ENCODE measurements at regions of chr5 and their contacts with region 1.

Region 1: DNA sequence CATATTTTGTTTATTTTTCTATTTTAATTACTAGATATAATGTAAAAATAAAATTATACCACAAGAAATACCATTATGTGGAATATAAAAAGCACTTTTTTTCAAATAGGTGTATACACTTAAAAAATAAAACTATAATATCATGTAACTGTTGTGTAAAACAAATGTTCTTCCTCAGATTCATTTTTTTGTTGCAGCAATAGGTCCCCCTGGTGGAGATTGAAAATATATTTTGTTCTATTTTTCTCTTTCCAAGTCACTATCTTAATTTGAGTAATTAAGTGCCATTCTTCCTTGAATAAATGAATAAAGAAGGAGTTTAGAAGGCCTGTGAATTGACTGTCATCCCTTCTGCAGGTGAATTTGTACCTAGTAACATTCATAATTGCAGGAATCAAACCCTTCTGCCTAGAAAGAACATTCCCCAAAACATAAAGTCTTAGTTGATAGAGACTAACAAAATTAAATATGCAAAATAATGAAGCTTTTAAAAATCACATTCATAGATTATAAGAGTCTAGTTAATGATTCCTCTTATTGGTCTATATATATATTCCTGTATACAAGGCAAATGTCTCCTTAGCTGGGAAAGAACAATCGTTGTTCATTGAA is 23.4 kb downstream of the CETN3 start:
- DNase-seq: no peak
- H3K4me3 Mint-ChIP-seq: no peak overlapping the region
- H3K27ac Mint-ChIP-seq: no peak overlapping the region
- H3K4me1 Mint-ChIP-seq: peaks cover 10% of the 10 kb centered on the region
- H3K27me3 Mint-ChIP-seq: no peaks in the 10 kb centered on the region
- CTCF ChIP-seq: peak; percentile 59

Region 2: GRCh38 chr5:90201923-90202322 is 184.3 kb before region 1 on chr5:
- CTCF ChIA-PET with region 1: no interaction called
- intact Hi-C with region 1: loop called (anchors 5 kb)
- DNase-seq: peak; percentile 77
- H3K4me3 Mint-ChIP-seq: peak overlapping the region; percentile 3
- H3K27ac Mint-ChIP-seq: peak overlapping the region; percentile 90
- H3K4me1 Mint-ChIP-seq: peaks cover 42% of the 10 kb centered on the region
- H3K27me3 Mint-ChIP-seq: no peaks in the 10 kb centered on the region
- CTCF ChIP-seq: no peak

Region 3: GRCh38 chr5:90274216-90274615 is 112.0 kb before region 1 on chr5:
- CTCF ChIA-PET with region 1: no interaction called
- intact Hi-C with region 1: loop called (anchors 5 kb)
- DNase-seq: no peak
- H3K4me3 Mint-ChIP-seq: no peak overlapping the region
- H3K27ac Mint-ChIP-seq: no peak overlapping the region
- H3K4me1 Mint-ChIP-seq: no peaks in the 10 kb centered on the region
- H3K27me3 Mint-ChIP-seq: no peaks in the 10 kb centered on the region
- CTCF ChIP-seq: no peak

Region 4: GRCh38 chr5:90308787-90309553 is 77.2 kb before region 1 on chr5:
- CTCF ChIA-PET with region 1: no interaction called
- intact Hi-C with region 1: loop called (anchors 5 kb)
- DNase-seq: no peak
- H3K4me3 Mint-ChIP-seq: no peak overlapping the region
- H3K27ac Mint-ChIP-seq: no peak overlapping the region
- H3K4me1 Mint-ChIP-seq: peaks cover 9% of the 10 kb centered on the region
- H3K27me3 Mint-ChIP-seq: no peaks in the 10 kb centered on the region
- CTCF ChIP-seq: no peak

Region 5: GRCh38 chr5:90324092-90324491 is 62.1 kb before region 1 on chr5:
- CTCF ChIA-PET with region 1: no interaction called
- intact Hi-C with region 1: no loop called
- DNase-seq: no peak
- H3K4me3 Mint-ChIP-seq: no peak overlapping the region
- H3K27ac Mint-ChIP-seq: no peak overlapping the region
- H3K4me1 Mint-ChIP-seq: no peaks in the 10 kb centered on the region
- H3K27me3 Mint-ChIP-seq: no peaks in the 10 kb centered on the region
- CTCF ChIP-seq: no peak

Measured in Calu3 (cell line).